ENCODE measurements at regions of chr10 and their contacts with region 1.

Region 1: GRCh38 chr10:112146799-112147198 is 36.8 kb downstream of the GPAM start:
- DNase-seq: no peak
- H3K4me3 ChIP-seq: no peak overlapping the region
- H3K27ac ChIP-seq: no peak overlapping the region
- H3K4me1 ChIP-seq: no peaks in the 10 kb centered on the region
- H3K27me3 ChIP-seq: no peaks in the 10 kb centered on the region
- CTCF ChIP-seq: no peak

Region 2: DNA sequence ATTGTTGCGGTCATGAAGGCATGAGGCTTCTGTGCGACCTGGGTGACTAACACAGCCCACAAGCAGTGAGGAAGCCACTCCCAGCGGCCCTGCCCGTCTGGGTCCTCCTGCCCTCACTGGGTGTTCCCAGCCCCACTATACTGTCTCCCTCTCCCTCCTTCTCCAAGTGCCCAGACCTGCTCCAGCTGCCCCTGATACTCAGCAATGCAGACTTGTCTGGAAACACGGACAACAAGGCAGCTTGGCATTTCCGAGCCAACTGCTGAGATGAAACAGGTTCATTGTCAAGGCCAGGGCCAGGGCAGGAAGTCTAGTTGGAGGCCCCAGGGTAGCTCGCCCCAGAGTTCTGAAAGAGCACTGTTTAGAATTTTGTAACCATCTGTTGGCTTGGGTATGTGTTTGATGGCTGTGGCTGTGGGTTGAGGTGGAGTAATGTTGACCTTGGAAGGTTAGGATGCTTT is 1407.0 kb before region 1 on chr10:
- intact Hi-C with region 1: loop called (anchors 2 kb)
- DNase-seq: no peak
- H3K4me3 ChIP-seq: no peak overlapping the region
- H3K27ac ChIP-seq: no peak overlapping the region
- H3K4me1 ChIP-seq: peaks cover 0 to 9% (median 4%) of the 10 kb centered on the region in 4 donors
- H3K27me3 ChIP-seq: no peaks in the 10 kb centered on the region
- CTCF ChIP-seq: no peak

Region 3: GRCh38 chr10:111590703-111591102 is 556.1 kb before region 1 on chr10:
- intact Hi-C with region 1: no loop called
- DNase-seq: no peak
- H3K4me3 ChIP-seq: no peak overlapping the region
- H3K27ac ChIP-seq: no peak overlapping the region
- H3K4me1 ChIP-seq: no peaks in the 10 kb centered on the region
- H3K27me3 ChIP-seq: no peaks in the 10 kb centered on the region
- CTCF ChIP-seq: no peak

Region 4: DNA sequence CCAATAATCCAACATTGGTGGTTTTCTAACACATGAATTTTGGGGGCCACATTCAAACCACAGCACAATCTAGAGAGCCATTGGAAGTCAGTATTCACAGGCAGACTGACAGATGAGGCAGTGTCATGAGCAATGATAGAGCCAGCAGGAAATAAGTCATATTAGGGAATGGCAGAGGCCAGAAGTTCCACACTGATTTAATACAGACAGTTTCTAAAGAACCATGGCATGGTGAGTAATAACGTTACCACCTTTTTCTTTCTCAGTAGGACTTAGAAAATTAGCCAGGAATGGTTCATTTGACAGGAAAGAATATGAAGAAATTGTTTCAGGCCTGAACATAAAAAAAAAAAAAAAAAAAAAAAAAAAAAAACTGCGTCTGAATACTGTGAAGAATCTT is 173.5 kb before region 1 on chr10:
- intact Hi-C with region 1: no loop called
- DNase-seq: no peak
- H3K4me3 ChIP-seq: no peak overlapping the region
- H3K27ac ChIP-seq: no peak overlapping the region
- H3K4me1 ChIP-seq: no peaks in the 10 kb centered on the region
- H3K27me3 ChIP-seq: no peaks in the 10 kb centered on the region
- CTCF ChIP-seq: no peak

Region 5: DNA sequence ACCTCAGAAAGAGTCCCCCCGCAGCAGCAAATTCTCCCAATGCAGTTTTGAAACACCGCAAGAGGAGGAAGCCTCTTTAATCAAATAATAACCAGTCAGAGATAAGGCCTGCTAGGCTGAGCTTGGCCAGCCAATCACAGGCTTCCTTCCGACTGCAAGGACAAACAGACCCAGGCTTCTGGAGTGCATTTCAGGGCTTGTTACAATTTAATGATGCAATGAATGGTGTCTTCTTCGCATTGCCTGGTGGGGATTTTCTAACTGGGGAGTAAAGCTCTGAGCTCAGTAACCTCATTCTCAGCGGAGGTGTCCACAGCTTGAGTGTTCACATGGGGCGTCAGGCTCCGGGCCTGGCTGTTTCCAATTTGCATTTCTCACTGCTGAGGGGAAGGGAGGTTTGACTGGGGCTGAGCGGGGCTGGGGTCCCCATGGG is 68.6 kb after region 1 on chr10:
- intact Hi-C with region 1: no loop called
- DNase-seq: no peak
- H3K4me3 ChIP-seq: no peak overlapping the region
- H3K27ac ChIP-seq: no peak overlapping the region
- H3K4me1 ChIP-seq: no peaks in the 10 kb centered on the region
- H3K27me3 ChIP-seq: no peaks in the 10 kb centered on the region
- CTCF ChIP-seq: no peak